ENCODE measurements at regions of chr16 and their contacts with region 1.

Region 1: DNA sequence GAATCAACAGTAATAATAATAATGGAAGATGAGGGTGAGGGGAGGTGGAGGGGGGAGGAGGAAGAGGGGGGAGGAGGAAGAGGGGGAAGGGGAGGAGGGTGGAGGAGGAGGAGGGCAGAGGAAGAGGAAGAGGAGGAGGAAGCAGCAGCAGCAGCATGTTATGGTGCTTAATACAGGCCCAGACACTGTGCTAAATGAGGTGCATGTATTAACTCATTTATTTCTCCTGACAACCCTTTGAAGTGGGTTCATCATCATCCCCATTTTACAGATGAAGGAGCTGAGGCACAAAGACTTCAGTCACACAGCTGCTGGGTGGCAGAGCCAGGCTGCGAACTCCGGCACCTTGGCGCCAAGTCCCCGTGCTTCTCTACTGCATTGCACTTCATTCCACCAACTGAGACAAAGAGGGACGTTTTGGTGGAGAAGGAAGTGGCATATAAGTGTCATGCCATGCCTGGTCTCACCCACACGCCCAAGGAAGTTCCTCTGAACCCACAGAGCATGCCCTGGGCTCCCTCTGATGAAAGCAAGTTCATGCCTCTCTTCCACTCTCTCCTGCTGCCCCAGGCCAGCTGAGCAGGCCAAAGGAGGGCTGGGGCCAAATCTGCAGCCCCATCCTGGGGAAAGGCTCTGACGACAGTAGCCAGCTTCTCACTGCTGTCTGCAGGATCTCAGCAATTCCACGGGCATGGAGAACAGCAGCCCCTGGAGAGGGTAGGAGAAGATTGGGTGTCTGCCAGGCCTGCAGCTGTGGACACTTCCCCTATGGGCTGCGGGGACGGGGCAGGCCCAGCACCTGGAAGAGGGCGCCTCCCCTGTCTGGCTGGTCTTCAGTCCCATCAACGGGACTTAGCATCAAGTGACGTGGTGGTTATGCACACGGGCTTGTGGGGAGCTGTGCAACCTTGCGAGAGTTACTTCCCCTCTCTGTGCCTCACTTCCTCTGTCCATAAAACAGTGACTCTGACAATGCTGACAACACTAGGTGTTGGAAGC is 21.8 kb downstream of the XYLT1 start:
- DNase-seq: no peak
- ATAC-seq: peak; percentile 72
- H3K4me3 Mint-ChIP-seq: no peak overlapping the region
- H3K27ac Mint-ChIP-seq: peak overlapping the region; percentile 65
- H3K4me1 Mint-ChIP-seq: peaks cover 50% of the 10 kb centered on the region
- H3K27me3 Mint-ChIP-seq: no peaks in the 10 kb centered on the region
- CTCF ChIP-seq: no peak

Region 2: DNA sequence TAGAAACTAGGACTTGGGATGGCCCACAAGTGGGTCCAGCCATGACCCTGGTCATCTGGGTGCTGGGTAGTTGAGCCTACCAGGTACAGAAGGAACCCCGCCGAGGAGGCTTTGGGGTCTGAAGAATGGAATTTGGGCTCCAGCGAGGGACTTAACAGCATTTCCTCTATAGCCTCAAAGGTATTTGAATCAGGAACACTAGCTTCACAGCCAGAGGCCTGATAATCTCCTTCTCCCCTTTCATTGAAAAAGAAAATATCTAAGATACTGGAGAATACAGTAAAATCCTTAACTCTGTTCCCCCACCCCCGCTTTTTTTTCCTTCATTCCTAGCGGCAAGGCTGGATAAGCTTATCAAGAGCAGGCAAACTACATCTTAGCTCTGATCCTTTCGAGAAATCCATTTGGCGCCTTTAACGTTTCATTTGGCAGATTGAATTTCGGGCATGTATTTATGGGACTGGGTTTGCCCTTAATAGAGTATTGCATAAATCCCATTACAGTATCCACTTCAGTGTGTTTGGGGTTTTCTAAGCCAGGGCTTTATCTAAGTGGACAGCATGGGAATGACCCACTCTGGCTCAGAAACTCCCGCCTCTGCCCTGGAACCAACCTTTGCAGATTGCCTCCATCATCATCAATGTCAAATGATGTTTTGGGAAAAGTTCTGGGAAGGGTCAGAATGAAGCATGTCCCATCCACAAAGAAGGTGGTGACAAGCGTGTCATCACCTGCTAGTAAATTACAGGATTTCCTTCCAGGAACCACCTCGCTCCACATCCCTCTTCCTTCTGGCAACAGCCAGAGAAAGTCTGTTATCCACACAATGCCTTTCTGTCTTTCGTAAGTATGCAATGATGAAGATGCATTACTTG is 15.1 kb before region 1 on chr16:
- CTCF ChIA-PET with region 1: no interaction called
- POLR2A ChIA-PET with region 1: no interaction called
- intact Hi-C with region 1: loop called (anchors 2 kb)
- DNase-seq: no peak
- ATAC-seq: no peak
- H3K4me3 Mint-ChIP-seq: no peak overlapping the region
- H3K27ac Mint-ChIP-seq: no peak overlapping the region
- H3K4me1 Mint-ChIP-seq: peaks cover 55% of the 10 kb centered on the region
- H3K27me3 Mint-ChIP-seq: no peaks in the 10 kb centered on the region
- CTCF ChIP-seq: no peak

Measured in activated B cell treated with CpG ODN at 0.5 μM for 24 hours (primary cell).